Heart left ventricle (tissue), 16 donors: ENCODE measurements at regions of chr17 and their contacts with region 1.

Region 1: DNA sequence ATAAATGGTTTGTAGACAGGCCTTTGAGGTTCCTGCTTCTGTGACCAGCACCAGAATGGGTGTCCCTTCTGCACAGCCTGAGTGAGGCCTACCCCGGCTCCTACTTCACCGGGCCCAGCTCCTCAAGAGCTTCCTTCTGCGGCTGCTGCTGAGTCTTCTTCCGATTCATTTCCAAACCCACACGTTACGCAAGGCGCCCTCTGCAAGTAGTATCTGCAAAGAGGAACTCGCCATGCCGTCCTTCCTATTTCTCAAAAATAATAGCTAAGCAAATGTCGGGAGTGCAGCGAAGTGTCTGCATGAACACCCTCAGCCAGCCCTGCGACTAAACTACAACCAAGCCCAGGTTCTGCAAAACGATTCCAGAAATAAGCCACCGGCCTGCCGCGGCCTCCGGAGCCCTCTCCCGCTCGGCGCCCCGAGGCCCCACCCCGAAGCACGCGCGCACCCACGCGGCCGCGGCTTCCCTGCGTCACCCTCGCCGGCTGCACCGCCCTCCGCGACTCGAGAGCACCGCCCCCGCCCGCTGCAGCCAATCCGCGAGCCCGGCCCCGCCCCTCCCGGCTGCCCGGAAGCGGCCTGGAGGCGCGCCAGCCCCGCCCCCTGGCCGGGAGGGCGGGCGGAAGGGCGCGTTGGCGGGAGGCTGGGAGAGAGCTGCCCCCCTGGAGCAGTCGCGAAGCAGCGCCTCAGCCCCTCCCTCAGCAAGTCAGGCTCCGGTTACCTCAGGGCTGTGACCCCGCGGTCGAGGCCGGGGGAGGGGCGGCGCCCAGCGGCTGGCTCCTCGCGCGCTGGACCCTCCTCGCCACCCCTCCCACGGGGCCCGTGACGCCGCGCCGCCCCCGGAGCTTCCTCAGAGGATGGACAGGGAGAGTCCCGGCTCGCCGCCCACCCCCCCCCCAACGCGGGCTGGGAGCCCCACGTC is 8.3 kb downstream of the MNT start:
- DNase-seq: peak; percentile 96 to 98 (median 98)
- ATAC-seq: peak; percentile 31 to 71 (median 64)
- H3K4me3 ChIP-seq: peak overlapping the region; percentile 62 to 97 (median 84)
- H3K27ac ChIP-seq: peak overlapping the region; percentile 99 to 100 (median 100)
- H3K4me1 ChIP-seq: peaks cover 24 to 71% (median 59%) of the 10 kb centered on the region in 12 donors
- H3K27me3 ChIP-seq: no peaks in the 10 kb centered on the region
- CTCF ChIP-seq: no peak
- POLR2A ChIP-seq: peak in 1 of 2 donors; percentile 49

Region 2: GRCh38 chr17:2406903-2407790 is 14.6 kb after region 1 on chr17:
- intact Hi-C with region 1: loop called in 2 of 10 experiments (anchors 2 kb)
- DNase-seq: peak in 4 of 5 donors; percentile 64 to 81 (median 70)
- ATAC-seq: peak; percentile 31 to 78 (median 72)
- H3K4me3 ChIP-seq: no peak overlapping the region
- H3K27ac ChIP-seq: peak overlapping the region in 11 of 12 donors; percentile 65 to 99 (median 73)
- H3K4me1 ChIP-seq: peaks cover 0 to 59% (median 47%) of the 10 kb centered on the region in 12 donors
- H3K27me3 ChIP-seq: no peaks in the 10 kb centered on the region
- CTCF ChIP-seq: no peak
- POLR2A ChIP-seq: peak in 1 of 2 donors; percentile 19

Region 3: DNA sequence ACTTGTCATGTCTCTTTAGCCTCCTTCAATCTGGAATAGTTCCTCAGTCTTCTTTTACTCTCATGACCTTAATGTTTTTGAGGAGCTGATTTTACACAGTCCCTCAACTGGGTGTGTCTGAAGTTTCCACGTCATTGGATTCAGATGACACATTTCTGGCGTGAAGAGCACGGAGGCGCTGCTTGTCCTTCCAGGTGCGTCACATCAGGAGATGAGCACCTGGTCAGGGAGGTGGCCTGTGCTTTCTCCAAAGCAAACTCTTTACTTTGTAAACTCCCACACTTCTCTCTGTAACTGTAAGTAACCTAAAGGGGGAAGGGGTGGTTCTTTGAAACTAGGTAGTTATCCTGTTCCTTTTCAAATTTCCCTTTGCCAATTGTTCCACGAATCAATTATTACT is 60.8 kb after region 1 on chr17:
- intact Hi-C with region 1: no loop called
- DNase-seq: no peak
- ATAC-seq: no peak
- H3K4me3 ChIP-seq: no peak overlapping the region
- H3K27ac ChIP-seq: no peak overlapping the region
- H3K4me1 ChIP-seq: peaks cover 0 to 26% (median 0%) of the 10 kb centered on the region in 12 donors
- H3K27me3 ChIP-seq: no peaks in the 10 kb centered on the region
- CTCF ChIP-seq: no peak
- POLR2A ChIP-seq: no peak